Spleen (tissue), 13 donors: ENCODE measurements at regions of chr5 and their contacts with region 1.

Region 1: GRCh38 chr5:76715736-76716455 is at the start of gene F2R:
- DNase-seq: peak; percentile 92
- H3K4me3 ChIP-seq: peak within 1 kb of the TSS; percentile 55 to 84 (median 72)
- H3K27ac ChIP-seq: peak within 1 kb of the TSS; percentile 77 to 92 (median 89)
- H3K4me1 ChIP-seq: peaks cover 16 to 70% (median 51%) of the 10 kb centered on the region in 6 donors
- H3K27me3 ChIP-seq: peaks cover 0 to 35% (median 10%) of the 10 kb centered on the region in 7 donors
- CTCF ChIP-seq: peak in 10 of 11 experiments; percentile 5 to 80 (median 66)
- POLR2A ChIP-seq: no peak
- total RNA-seq, gene F2R: 57.3 to 128 (median 111) TPM

Region 2: GRCh38 chr5:76601470-76601869 is 114.4 kb before region 1 on chr5:
- intact Hi-C with region 1: loop called (anchors 10 kb)
- DNase-seq: no peak
- H3K4me3 ChIP-seq: no peak overlapping the region
- H3K27ac ChIP-seq: no peak overlapping the region
- H3K4me1 ChIP-seq: peaks cover 0 to 18% (median 5%) of the 10 kb centered on the region in 6 donors
- H3K27me3 ChIP-seq: no peaks in the 10 kb centered on the region
- CTCF ChIP-seq: peak; percentile 35 to 79 (median 65)
- POLR2A ChIP-seq: no peak

Region 3: GRCh38 chr5:76893294-76893693 is 177.4 kb after region 1 on chr5:
- intact Hi-C with region 1: no loop called
- DNase-seq: no peak
- H3K4me3 ChIP-seq: no peak overlapping the region
- H3K27ac ChIP-seq: no peak overlapping the region
- H3K4me1 ChIP-seq: no peaks in the 10 kb centered on the region
- H3K27me3 ChIP-seq: no peaks in the 10 kb centered on the region
- CTCF ChIP-seq: no peak
- POLR2A ChIP-seq: no peak